ENCODE measurements at regions of chr1 and their contacts with region 1.

Region 1: DNA sequence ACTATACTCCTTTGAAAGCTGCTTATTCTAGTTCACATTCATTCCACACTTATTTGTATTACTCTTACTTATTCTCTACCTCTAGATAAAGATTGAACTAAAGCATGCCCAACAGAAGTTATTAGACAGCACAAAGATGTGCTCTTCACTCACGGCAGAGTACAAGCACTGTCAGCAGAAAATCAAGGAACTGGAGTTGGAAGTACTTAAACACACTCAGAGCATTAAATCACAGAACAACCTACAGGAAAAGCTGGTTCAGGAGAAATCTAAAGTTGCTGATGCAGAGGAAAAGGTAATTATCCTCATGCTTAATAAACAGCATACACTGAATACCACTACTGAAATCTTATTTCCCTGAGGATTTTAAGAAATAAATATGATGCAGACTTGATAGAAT is 81.3 kb upstream of the PPIH start:
- DNase-seq: no peak
- H3K4me3 Mint-ChIP-seq: no peak overlapping the region
- H3K27ac Mint-ChIP-seq: no peak overlapping the region
- H3K4me1 Mint-ChIP-seq: no peaks in the 10 kb centered on the region
- H3K27me3 Mint-ChIP-seq: peaks cover 2% of the 10 kb centered on the region

Region 2: GRCh38 chr1:42730988-42731387 is 154.1 kb after region 1 on chr1:
- intact Hi-C with region 1: loop called (anchors 1 kb)
- DNase-seq: peak; percentile 67
- H3K4me3 Mint-ChIP-seq: no peak overlapping the region
- H3K27ac Mint-ChIP-seq: no peak overlapping the region
- H3K4me1 Mint-ChIP-seq: peaks cover 2% of the 10 kb centered on the region
- H3K27me3 Mint-ChIP-seq: no peaks in the 10 kb centered on the region

Region 3: GRCh38 chr1:42747125-42747524 is 170.2 kb after region 1 on chr1:
- intact Hi-C with region 1: loop called (anchors 1 kb)
- DNase-seq: peak; percentile 80
- H3K4me3 Mint-ChIP-seq: no peak overlapping the region
- H3K27ac Mint-ChIP-seq: no peak overlapping the region
- H3K4me1 Mint-ChIP-seq: no peaks in the 10 kb centered on the region
- H3K27me3 Mint-ChIP-seq: no peaks in the 10 kb centered on the region

Region 4: DNA sequence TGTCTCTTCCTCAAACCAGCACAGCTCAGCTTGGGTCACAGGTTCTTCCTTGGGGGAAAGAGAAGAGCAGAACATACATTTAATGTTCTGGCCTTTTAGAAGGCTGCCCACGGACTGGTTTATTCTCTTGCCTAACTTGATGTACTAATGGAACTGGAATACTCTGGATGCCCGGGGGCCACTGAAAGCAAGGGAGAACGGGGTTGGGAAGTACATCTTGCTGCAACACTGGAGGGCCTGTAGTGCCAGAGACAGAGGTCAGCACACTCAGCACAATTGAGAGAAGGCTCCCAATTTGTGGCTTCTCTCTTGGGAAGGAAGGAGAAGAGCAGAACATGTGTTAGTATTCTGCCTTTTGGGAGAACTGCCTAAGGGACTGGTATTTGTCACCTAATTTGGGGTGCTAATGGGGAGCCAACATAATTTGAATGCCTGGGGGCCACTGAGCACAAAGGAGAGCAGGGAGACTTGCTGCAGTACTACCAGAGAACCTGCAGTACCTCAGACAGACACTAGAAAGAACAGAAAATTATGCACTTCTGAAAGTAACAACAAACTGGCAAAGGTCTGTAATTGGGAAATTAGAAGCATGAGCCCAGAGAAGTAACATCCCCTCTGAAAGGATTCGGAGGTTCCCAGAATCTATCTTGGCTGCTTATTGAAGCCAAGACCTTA is 283.5 kb after region 1 on chr1:
- intact Hi-C with region 1: no loop called
- DNase-seq: no peak
- H3K4me3 Mint-ChIP-seq: no peak overlapping the region
- H3K27ac Mint-ChIP-seq: no peak overlapping the region
- H3K4me1 Mint-ChIP-seq: no peaks in the 10 kb centered on the region
- H3K27me3 Mint-ChIP-seq: peaks cover 18% of the 10 kb centered on the region

Measured in activated CD4-positive, alpha-beta T cell treated with anti-CD3 and anti-CD28 coated beads, Interleukin-2, amount 10 ng/mL, durations not matched to agents 24 days and 14 days (primary cell).